ENCODE measurements at regions of chr22 and their contacts with region 1.

Region 1: DNA sequence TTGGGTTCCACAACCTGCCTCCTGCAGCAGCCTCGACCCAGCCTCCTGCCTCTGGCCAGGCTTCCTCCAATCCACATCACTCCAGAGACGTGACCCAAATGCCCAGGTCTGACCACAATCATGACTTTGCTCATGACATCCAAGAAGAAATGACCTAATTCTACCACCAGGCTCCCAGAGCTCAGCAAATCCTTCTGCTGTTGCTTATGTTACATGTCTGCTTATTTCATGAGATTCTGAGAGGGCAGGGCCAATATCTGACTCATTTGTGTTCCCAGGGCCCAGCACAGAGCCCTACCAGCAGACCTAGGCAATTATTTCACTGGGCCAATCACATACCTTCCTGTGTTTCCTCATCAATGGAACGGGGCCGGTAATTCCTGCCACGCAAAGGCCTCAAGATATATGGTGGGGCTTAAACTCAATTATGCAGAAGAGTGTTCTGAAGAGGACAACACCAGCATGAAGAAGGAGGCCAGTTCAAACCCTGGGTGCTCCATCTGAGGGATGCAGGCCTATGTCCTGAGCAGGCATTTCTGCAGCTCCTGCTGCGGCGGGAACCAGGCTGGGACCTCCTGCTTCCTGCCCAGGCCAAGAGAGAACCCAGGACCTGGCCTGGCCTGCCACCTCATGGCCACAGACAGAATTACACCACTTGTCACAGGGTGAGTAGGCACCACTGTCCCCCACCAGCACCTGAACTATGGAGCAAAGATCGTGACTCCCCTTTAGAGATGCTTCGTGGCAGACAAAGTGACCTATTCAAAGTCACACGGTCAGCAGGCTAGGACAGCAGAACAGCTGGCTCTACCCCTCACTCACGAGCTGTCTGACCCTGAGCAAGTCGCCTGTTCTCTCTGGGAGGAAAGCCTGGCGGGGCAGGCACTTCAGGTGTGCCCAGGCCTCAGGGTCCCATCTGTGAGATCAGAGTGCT is 5.9 kb downstream of the CENPM start:
- DNase-seq: peak; percentile 72
- CTCF ChIP-seq: peak; percentile 86

Region 2: DNA sequence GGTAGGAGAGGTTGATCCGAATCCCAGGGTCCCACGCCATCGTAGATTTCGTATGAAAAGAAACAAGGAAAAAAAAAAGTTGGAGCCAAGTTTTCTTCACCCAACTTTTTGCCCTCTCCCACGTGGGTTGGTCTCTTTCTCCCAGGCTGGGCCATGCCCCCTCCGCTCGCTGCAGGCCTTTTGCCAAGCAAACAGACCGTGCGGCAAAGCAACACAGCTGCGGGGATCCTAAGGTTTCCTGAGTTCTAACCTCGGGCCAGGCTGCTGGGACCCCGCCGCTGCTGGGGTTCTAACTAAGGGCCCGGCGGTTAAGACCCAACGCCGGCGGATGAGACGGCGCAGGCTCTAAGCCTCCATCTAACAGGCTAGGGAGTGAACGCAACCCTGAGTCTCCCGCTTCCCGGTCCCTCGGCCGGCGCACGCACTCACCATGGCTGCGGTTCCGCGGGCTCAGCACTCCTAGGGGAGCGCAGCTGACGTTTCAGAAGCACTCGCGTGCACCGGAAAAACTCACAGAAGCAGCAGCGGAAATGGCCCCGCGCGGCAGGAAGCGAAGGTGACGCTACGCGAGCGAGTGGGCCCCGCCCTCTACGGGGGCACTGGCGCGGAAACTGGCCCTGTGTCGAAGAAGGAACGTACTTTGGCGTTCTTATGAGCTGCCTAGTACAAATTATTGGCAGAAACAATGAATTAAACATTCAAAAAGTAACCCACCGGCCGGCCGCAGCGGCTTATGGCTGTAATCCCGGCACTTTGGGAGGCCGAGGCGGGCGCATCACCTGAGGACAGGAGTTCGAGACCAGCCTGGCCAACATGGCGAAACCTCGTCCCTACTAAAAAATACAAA is 252.5 kb before region 1 on chr22 and contains the start of gene SNU13:
- CTCF ChIA-PET with region 1: interaction called, 14 read pairs
- POLR2A ChIA-PET with region 1: interaction called, 6 read pairs
- DNase-seq: peak; percentile 95
- CTCF ChIP-seq: no peak

Region 3: DNA sequence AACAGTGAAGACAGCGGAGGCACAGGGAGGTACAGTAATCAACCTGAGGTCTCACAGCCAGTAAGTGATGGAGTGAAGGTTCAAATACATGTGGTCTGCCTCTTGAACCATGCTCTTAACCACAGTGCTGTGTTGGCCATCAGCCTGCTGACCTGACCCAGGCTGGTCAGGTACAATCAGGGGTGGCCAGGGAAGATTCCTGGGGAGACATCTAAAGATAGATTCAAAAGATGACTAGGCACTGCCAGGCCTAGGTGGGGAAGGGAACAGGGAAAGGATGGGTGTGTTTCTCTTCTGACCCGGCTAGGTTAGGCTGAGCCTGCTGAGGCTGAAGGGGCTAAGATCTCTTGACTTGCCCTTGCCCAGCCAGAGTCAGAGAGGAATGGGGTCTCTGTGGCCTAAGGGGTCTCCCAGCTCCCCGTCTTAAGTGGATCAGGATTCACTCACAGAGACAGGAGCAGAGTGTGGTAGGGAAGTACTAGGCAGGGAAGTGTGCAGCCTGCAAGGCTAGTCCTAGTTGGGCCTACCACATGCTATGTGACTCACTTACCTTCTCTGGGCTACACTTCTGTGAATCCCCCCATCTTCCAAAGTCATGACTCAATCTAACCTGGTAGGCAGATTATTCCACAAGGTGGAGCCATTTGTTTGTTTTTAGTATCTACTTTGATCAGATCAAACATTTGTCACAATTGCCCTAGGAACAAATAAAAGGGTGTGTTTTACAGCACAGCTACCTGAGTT is 118.6 kb before region 1 on chr22:
- CTCF ChIA-PET with region 1: interaction called, 33 read pairs
- POLR2A ChIA-PET with region 1: interaction called, 3 read pairs
- DNase-seq: peak; percentile 69
- CTCF ChIP-seq: peak; percentile 55

Region 4: DNA sequence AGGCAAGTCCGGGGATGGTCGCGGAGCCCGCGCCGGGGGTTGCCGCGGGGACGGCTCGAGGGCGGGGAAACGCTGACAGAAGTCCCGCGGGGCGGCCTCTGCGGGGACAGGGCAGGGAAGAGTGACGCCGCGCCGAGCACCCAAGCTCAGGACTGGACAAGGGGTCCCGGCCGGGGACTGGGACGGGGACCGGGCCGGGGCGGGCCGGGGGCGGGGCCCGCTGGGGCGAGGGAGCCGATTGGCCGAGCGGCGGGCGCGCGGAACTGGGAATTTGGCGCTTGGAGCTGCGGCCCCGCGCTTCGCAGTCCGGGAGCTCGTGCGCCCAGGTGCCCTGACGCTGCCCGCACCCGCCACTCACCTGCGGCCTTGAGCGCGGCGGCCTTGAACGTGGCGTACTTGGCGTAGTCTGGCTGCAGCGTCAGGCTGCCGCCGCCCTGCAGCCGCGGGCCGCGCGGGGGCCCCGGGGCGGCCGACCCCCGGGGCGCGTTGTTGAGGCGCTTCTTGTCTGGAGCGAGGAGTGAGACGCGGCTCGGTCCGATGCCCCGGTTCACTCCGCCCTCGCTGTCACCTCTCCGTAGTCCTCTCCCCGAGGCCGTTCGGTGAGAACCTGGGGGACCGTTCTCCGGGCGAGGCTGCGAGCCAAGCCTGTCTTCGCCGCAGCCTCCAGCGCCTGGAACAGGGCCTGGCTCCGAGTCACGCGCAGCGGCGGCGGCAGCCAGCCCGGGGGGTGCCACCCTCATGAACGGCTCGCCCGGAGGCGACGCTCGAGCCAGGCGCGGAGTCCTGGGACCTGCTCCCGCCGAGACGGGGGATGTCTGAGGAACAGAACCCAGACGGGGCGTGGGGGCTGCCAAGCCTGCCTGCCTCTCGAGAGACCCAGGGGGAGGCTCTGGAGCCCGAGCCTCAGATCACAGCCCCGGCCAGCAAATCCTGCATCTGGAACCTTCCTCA is 30.8 kb before region 1 on chr22:
- CTCF ChIA-PET with region 1: interaction called, 11 read pairs
- POLR2A ChIA-PET with region 1: interaction called, 3 read pairs
- DNase-seq: no peak
- CTCF ChIP-seq: no peak

Region 5: GRCh38 chr22:41925655-41926460 is 15.2 kb before region 1 on chr22:
- CTCF ChIA-PET with region 1: interaction called, 229 read pairs
- POLR2A ChIA-PET with region 1: interaction called, 118 read pairs
- DNase-seq: peak; percentile 63
- CTCF ChIP-seq: peak; percentile 94

Region 6: GRCh38 chr22:42022162-42022835 is 81.2 kb after region 1 on chr22:
- CTCF ChIA-PET with region 1: no interaction called
- POLR2A ChIA-PET with region 1: no interaction called
- DNase-seq: peak; percentile 58
- CTCF ChIP-seq: no peak